Posterior vena cava (tissue), 2 donors: ENCODE measurements at regions of chr17 and their contacts with region 1.

Region 1: DNA sequence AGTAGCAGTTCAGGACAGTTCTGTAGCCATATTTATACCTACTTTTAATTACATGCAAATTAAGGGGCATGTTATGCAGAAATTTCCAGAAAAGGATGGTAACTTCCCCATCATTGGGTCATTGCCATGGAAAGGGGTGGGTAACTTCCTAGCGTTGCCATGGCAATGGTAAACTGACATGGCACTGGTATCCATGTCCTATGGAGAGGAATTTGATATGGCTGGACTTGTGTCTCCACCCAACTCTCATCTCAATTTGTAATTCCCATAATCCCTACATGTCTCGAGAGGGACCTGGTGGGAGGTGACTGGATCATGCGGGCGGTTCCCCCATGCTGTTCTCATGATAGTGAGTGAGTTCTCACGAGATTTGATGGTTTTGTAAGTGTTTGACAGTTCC is 35.6 kb upstream of the CACNG4 start:
- DNase-seq: peak; percentile 30

Region 2: DNA sequence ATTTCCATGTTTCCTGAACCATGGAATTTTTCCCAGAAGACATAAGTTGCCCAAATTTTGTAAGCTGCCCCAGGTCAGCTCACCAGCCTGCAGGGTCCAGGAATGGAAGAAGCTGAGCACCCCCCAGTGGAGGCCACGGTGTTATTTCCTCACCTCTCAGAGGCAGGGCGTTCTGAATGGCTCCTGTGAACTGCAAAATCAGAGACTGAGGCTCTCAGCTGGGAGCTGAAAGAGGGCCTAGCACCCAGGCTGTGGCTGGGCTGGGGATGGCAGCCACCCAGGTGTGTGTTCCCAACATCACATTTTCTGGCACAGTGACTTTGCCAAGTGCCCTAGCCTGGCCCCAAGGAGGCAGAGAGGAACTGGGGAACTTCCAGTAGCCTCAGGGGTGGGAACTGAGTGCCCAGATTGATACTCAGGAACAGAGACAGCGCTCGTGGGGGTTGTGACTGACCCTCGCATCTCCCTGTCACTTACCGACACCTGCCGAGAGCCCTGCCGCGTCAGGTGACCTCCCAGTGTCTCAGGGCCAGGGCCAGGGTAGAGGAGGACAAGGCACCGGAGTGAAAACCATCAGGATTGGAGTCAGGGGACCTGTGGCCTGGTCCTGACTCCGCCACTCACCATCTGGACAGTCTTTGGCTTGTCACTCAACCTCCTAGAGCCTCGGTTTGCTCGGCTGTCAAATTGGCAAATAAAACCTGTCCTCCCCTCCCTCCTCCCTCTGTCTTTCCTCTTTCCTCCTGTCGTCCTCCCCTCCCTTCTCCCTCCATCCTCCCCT is 46.8 kb after region 1 on chr17:
- intact Hi-C with region 1: loop called in 1 of 2 experiments (anchors 1 kb)
- DNase-seq: no peak

Region 3: DNA sequence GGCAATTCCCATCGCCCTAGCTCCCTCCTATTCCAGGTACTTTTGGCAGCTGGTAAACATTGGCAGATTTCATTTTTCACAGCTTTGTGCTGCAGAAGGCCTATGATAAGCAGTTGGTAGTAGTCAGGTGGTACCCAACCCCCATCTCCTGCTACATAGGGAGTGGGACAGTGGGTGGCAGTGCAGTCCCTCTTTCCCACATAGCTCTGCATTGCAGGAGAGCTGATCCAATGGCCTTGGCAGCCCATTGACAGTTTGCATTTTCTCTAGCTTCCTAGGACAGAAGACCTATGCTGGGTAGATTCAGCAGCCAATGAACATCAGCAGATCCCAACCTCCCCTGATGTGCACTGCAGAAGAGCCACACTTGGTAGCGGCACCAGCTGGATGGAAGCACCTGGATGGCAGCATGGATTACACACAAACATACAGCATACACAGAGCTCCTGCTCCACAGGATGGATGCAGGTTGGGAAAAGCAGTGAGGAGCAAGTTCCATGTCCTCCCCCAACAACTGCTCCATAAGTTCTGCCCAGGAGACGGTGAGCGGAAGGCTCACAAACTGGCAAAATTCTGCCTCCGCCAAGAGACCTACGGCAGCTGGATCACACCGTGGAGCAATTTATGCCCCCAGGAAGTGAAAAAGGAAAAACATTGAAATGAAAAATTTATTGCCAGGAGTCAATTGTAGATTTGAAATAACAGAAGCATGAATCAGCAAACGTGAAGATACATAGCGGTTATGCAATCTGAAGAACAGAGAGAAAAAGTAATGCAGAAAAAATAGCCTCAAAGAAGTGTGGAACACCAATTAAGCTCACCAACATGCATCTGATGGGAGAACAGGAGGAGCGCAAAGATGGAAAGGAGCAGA is 211.1 kb after region 1 on chr17:
- intact Hi-C with region 1: no loop called
- DNase-seq: no peak

Region 4: DNA sequence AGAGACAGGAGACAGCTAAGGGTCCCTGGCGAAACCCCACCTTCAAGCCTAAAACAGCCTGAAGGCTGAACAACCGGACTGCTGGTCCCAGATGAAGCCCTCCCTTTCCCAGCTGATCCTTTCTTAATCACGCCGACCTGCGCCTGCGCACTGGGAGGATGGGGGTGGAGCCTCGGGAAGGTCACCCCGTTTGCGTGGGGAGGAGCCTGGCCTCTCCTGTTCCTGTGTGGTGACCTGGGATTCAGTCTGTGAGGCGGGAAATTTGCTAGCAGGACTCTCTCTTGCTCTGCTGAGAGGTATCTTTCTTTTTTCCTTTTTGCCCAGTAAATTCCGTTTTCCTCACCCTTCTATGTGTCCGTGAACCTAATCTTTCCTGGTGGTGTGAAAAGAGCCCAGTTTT is 1662.6 kb after region 1 on chr17:
- intact Hi-C with region 1: no loop called
- DNase-seq: no peak